Cardiac septum (tissue), 1 donor: ENCODE measurements at regions of chr11 and their contacts with region 1.

Region 1: GRCh38 chr11:46826310-46827044 is 19.6 kb downstream of the CKAP5 start:
- DNase-seq: peak; percentile 93

Region 2: DNA sequence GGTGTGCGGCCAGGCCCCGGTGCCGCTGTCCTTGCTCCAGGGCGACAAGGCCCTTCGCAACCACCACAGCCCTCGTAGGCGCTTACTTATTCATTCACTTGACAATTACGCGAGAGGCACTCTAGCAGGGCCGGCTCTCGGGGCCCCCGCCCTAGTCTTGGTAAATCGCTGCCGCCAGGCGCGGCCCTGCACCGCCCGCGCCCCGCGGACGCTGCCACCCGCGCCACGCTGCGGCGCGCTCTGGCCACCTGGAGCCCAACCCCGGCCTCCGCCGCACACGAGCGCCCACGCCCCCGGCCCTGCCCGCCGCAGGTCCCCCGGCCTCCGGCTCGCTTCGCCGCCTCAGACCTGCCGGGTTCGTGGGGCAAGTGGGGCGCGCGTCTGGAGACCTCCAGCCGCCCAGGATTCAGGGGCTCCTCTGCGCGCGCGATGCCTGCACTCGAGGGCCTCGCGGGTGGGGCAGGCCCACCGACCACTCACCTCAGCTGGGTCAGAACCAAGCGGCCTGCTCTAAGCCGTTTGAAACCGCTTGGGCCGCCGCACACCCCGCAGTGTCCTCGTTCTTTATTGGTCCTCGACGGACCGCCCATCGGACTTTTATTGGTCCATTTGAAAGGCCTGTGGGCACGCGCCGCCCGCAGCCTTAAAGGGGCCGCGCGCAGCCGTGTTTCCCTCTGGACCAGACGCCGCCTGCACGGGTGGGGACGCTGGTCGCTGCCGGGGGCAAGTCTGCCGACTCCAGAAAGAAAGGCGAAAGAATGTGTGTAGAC is 19.4 kb after region 1 on chr11 and contains the start of gene CKAP5:
- intact Hi-C with region 1: loop called (anchors 2 kb)
- DNase-seq: peak; percentile 95
- total RNA-seq, gene CKAP5: 84.2 TPM

Region 3: DNA sequence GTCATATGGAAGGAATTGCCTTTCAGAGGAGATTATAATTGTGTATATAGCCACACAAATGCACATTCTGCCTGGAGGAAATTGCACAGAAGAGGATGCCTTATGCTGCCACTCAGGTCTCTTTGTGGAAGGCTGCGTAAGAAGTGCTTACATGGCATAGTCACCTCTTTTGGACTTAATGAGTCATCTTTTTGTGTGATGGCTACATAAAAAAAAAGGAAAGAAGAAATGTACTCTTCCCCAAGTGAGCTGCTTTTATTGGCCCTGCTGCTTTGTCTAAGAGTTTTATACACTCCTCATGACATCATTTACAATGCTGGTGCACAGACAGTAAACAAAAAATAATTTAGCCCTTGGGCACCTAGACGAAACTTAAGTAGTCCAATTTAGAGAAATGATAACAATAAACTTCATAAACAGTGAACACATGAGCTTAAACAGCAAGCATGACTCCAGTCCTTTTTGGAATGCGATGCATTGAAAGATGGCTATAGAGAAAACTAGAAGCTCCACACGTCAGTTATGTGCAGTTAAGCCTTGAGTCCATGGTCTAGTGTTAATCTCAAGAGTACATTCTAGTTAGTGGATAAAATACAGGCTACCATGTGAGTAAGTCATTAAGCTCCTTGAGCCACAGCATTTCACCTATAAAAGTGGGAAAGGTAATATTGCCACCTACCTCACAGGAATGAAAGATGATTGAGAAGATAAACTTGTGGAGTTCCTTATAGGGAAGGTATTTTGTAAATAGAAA is 122.1 kb after region 1 on chr11:
- intact Hi-C with region 1: no loop called
- DNase-seq: no peak